ENCODE measurements at regions of chr15 and their contacts with region 1.

Region 1: GRCh38 chr15:75061272-75061671 is 37.9 kb downstream of the PPCDC start:
- DNase-seq: no peak
- ATAC-seq: no peak
- H3K4me3 ChIP-seq: no peak overlapping the region
- H3K27ac ChIP-seq: no peak overlapping the region
- H3K4me1 ChIP-seq: peaks cover 4% of the 10 kb centered on the region
- H3K27me3 ChIP-seq: no peaks in the 10 kb centered on the region
- CTCF ChIP-seq: no peak

Region 2: GRCh38 chr15:74937596-74938296 is 123.5 kb before region 1 on chr15 and contains the start of gene COX5A:
- intact Hi-C with region 1: no loop called
- DNase-seq: peak; percentile 95 to 97
- ATAC-seq: peak; percentile 95 to 98 (median 96)
- H3K4me3 ChIP-seq: peak within 1 kb of the TSS; percentile 99
- H3K27ac ChIP-seq: peak within 1 kb of the TSS; percentile 99
- H3K4me1 ChIP-seq: peaks cover 30% of the 10 kb centered on the region
- H3K27me3 ChIP-seq: no peaks in the 10 kb centered on the region
- CTCF ChIP-seq: no peak
- total RNA-seq, gene COX5A: 635 to 910 (median 767) TPM

Region 3: GRCh38 chr15:75023181-75023871 is 37.9 kb before region 1 on chr15 and contains the start of gene PPCDC:
- intact Hi-C with region 1: no loop called
- DNase-seq: peak; percentile 97 to 98
- ATAC-seq: peak; percentile 99 to 100 (median 100)
- H3K4me3 ChIP-seq: peak within 1 kb of the TSS; percentile 77
- H3K27ac ChIP-seq: peak within 1 kb of the TSS; percentile 86
- H3K4me1 ChIP-seq: peaks cover 13% of the 10 kb centered on the region
- H3K27me3 ChIP-seq: peaks cover 0 to 2% (median 0%) of the 10 kb centered on the region in 3 donors
- CTCF ChIP-seq: no peak
- total RNA-seq, gene PPCDC: 2.4 to 11.7 (median 4.9) TPM

Region 4: DNA sequence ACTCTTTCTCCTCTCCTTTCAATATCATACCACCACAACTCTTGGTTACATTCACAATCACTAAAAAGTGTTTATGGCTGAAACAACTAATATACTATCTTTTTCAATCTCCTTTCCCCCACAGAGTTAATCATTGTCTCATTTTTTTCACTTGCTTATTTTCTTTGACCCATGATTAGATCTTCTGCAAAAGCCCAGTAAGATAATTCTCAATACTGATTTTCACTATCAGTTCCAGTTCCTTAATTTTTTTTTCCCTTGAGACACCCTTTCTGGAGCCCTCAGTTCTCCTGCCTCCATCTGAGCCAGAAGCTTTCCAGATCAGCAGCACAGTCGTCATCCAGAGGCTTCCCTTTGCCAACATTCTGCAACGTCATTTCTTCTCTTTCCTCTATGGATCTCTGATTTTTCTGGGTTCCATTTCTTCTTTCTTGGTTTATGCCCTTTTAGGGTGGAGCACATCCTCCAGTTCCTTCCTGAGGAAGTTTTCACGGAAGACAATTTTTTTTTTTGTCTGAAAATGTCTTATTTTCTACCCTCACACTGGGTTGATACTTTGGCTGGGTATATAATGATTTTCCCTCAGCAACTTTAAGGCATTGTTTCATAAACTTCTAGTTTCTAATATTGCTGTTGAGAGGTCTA is 51.7 kb after region 1 on chr15:
- intact Hi-C with region 1: loop called in 1 of 2 experiments (anchors 5 kb)
- DNase-seq: no peak
- ATAC-seq: no peak
- H3K4me3 ChIP-seq: no peak overlapping the region
- H3K27ac ChIP-seq: no peak overlapping the region
- H3K4me1 ChIP-seq: peaks cover 2% of the 10 kb centered on the region
- H3K27me3 ChIP-seq: no peaks in the 10 kb centered on the region
- CTCF ChIP-seq: no peak